Mammary epithelial cell (primary cell): ENCODE measurements at regions of chr4 and their contacts with region 1.

Region 1: DNA sequence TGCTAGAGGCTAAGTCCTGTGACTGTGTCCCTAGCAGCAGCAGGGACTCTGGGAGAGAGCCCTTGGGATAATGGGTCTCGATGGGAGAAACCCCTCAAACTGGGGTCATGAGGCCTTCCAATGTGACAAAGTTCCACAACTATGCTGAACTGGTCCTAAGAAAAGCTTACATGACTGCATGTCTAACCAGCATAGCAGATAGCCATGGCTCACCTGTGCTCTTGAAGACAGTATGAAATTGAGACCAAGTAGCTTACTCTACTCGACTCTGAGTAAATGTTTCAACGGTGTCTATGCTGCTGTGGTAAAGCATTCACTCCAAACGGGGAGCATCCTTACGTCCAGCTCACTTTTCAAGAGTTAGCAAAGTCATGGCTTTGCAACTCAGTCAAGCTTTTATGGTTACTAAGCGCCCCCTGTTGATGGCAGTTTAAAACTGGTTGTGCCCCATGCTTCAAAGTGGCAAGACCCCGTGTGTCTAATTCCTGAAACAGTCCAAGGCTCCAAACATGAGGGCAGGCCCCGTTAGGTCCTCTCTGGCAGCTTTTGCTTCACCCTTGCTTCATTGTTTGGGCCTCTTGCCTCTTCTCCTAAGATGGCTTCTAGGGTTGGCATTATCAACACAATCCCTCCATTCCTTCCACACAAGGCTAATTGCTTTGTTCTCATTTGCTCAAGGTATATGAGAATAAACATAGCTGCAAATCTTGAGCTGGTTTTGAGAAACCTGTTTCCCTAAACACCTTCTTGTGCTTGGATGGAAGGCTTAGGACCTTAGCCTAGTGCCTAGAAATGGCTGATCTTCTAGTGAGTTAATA is 46.6 kb downstream of the CCNG2 start:
- DNase-seq: peak; percentile 75
- H3K4me3 ChIP-seq: no peak overlapping the region
- H3K27ac ChIP-seq: peak overlapping the region; percentile 90
- H3K4me1 ChIP-seq: peaks cover 44% of the 10 kb centered on the region
- H3K27me3 ChIP-seq: no peaks in the 10 kb centered on the region
- CTCF ChIP-seq: peak; percentile 80 to 87

Region 2: GRCh38 chr4:76430519-76431388 is 772.8 kb before region 1 on chr4:
- CTCF ChIA-PET with region 1: no interaction called
- dilution Hi-C with region 1: no loop called
- in situ Hi-C with region 1: no loop called
- intact Hi-C with region 1: loop called (anchors 5 kb)
- DNase-seq: peak; percentile 23
- H3K4me3 ChIP-seq: no peak overlapping the region
- H3K27ac ChIP-seq: no peak overlapping the region
- H3K4me1 ChIP-seq: peaks cover 17% of the 10 kb centered on the region
- H3K27me3 ChIP-seq: no peaks in the 10 kb centered on the region
- CTCF ChIP-seq: peak; percentile 57 to 65

Region 3: GRCh38 chr4:76585897-76586360 is 617.7 kb before region 1 on chr4:
- CTCF ChIA-PET with region 1: interaction called, 11 read pairs
- dilution Hi-C with region 1: no loop called
- in situ Hi-C with region 1: no loop called
- intact Hi-C with region 1: no loop called
- DNase-seq: peak; percentile 95
- H3K4me3 ChIP-seq: peak overlapping the region; percentile 67 to 77 (median 67)
- H3K27ac ChIP-seq: peak overlapping the region; percentile 79
- H3K4me1 ChIP-seq: peaks cover 34% of the 10 kb centered on the region
- H3K27me3 ChIP-seq: no peaks in the 10 kb centered on the region
- CTCF ChIP-seq: peak in 1 of 2 donors; percentile 42

Region 4: DNA sequence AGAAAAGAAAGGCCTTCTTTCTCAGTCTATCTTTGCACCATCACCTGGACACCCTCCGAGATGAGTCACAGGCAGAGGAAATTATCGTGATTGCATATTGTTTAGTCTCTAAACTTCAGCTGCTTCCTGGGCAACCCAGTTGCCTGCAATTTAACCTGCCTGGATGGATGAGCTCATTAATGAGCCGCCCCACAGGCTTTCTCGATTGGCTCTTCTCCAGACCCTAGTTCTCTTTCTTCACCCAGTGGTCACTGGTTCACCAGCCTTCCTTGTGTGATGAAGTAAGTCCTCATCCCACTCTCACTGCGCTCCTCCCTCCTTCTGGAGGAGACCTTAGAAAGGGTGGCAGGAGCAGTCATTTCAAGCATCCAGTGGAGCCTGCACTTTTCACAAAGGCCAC is 400.1 kb before region 1 on chr4:
- CTCF ChIA-PET with region 1: no interaction called
- dilution Hi-C with region 1: no loop called
- in situ Hi-C with region 1: no loop called
- intact Hi-C with region 1: no loop called
- DNase-seq: peak; percentile 97
- H3K4me3 ChIP-seq: no peak overlapping the region
- H3K27ac ChIP-seq: peak overlapping the region; percentile 83
- H3K4me1 ChIP-seq: peaks cover 13% of the 10 kb centered on the region
- H3K27me3 ChIP-seq: no peaks in the 10 kb centered on the region
- CTCF ChIP-seq: no peak

Region 5: DNA sequence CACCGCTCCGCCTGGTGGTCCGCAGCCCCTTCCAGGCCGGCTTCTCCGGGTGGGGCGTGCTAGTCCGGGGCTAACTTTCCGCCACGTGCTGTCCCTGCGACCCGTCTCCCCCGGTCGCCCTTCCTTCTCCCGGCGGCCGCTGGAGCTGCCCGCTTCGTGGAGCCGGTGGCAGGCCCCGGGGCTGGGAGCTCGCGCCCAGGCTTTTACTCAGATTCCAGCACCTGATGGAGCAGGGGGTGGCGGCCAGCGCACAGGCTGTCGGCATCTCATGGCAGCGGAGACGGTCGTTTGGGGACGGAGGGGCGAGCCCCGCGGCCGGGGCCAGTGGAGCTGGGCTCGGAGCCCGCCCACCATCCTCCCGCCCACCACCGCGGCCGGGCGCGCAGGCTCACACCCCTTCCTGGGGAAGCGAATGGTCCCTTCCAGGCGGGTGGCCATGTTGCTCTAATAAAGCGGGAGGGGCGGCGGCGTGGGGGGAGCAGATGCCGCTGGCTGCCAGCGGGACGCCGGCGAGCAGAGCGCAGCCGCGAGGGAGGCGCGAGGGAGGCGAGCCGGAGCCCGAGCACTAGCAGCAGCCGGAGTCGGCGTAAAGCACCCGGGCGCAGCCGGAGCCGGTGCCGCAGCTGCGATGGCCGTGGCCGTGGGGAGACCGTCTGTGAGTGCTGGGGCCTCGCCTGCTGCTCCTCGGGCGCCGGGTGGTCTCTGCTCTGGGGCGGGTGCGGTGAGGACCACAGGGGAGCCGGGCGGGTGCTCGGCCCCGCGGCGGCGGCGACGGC is 254.1 kb before region 1 on chr4 and contains the start of gene SEPTIN11:
- CTCF ChIA-PET with region 1: interaction called, 3 read pairs
- dilution Hi-C with region 1: no loop called
- in situ Hi-C with region 1: no loop called
- intact Hi-C with region 1: loop called (anchors 2 kb)
- DNase-seq: peak; percentile 92
- H3K4me3 ChIP-seq: peak within 1 kb of the TSS; percentile 61 to 80 (median 70)
- H3K27ac ChIP-seq: peak within 1 kb of the TSS; percentile 80
- H3K4me1 ChIP-seq: peaks cover 19% of the 10 kb centered on the region
- H3K27me3 ChIP-seq: no peaks in the 10 kb centered on the region
- CTCF ChIP-seq: no peak
- total RNA-seq, gene SEPTIN11: 156 to 188 TPM

Region 6: DNA sequence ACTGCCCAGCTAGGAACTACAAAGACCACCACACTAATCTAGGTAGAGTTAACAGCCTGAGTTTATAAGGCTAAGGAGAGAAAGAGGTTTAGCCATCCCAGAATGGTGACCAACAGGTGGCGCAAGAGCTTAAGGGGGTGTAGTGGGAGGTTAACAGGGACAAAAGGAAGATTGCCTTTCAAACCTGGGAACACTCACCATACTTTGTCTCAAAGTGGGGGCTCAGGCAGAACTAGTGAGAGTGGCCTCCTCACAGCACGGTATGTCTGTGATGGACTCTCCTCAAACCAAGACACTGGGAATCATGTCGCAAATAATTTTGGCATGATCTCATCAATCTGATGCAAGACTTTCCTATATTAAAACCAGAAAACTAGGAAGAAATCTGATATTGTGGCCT is 151.2 kb before region 1 on chr4:
- CTCF ChIA-PET with region 1: interaction called, 8 read pairs
- dilution Hi-C with region 1: loop called (anchors 5 kb)
- in situ Hi-C with region 1: loop called in 1 of 2 experiments (anchors 10 kb)
- intact Hi-C with region 1: loop called (anchors 1 kb)
- DNase-seq: peak; percentile 46
- H3K4me3 ChIP-seq: no peak overlapping the region
- H3K27ac ChIP-seq: peak overlapping the region; percentile 51
- H3K4me1 ChIP-seq: peaks cover 31% of the 10 kb centered on the region
- H3K27me3 ChIP-seq: no peaks in the 10 kb centered on the region
- CTCF ChIP-seq: peak; percentile 71 to 80

Region 7: GRCh38 chr4:77095101-77095821 is 108.3 kb before region 1 on chr4:
- CTCF ChIA-PET with region 1: interaction called, 7 read pairs
- dilution Hi-C with region 1: loop called (anchors 5 kb)
- in situ Hi-C with region 1: no loop called
- intact Hi-C with region 1: loop called (anchors 1 kb)
- DNase-seq: peak; percentile 53
- H3K4me3 ChIP-seq: no peak overlapping the region
- H3K27ac ChIP-seq: peak overlapping the region; percentile 26
- H3K4me1 ChIP-seq: peaks cover 43% of the 10 kb centered on the region
- H3K27me3 ChIP-seq: no peaks in the 10 kb centered on the region
- CTCF ChIP-seq: peak; percentile 94

Region 8: DNA sequence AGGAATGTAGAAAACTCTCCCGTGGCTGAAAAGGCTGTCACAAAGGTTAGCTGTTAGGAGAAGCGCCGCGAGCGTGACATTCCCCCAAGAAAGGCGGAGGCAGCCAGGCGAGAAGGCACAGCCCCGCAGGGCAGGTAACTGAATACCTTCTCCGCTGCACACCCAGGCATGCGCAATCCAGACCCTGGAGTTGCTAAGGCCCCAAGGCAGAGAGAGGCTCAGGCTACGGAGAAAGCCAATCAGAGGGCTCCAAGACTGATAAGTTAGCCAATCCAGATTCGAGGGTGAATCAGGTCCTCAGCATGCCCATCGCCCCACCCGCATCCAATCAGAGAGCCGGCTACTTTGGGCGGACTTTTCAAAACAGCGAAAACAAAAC is 47.1 kb before region 1 on chr4:
- CTCF ChIA-PET with region 1: interaction called, 7 read pairs
- dilution Hi-C with region 1: loop called (anchors 5 kb)
- in situ Hi-C with region 1: no loop called
- intact Hi-C with region 1: loop called (anchors 1 kb)
- DNase-seq: peak; percentile 100
- H3K4me3 ChIP-seq: peak overlapping the region; percentile 91 to 99 (median 99)
- H3K27ac ChIP-seq: peak overlapping the region; percentile 96
- H3K4me1 ChIP-seq: peaks cover 21% of the 10 kb centered on the region
- H3K27me3 ChIP-seq: no peaks in the 10 kb centered on the region
- CTCF ChIP-seq: no peak

Region 9: DNA sequence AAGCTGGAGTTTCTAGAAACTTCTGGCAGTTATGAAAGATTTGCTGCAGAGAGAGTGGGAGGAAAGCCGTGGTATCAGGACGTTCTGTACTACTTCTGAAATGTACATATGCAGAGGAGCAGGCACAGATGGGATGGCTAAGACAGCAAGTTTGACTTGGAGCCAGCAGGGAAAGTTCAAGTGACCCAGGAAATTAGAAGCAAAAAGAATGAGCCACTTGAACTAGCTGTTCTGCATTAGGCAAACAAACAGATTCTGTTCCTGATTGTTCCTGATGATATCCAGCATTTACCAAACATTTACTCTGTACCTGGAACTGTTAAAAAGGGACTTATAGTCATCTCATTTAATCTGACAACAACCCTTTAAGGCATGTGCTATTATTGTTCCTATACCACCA is 360.6 kb after region 1 on chr4:
- CTCF ChIA-PET with region 1: no interaction called
- dilution Hi-C with region 1: no loop called
- in situ Hi-C with region 1: no loop called
- intact Hi-C with region 1: no loop called
- DNase-seq: no peak
- H3K4me3 ChIP-seq: no peak overlapping the region
- H3K27ac ChIP-seq: no peak overlapping the region
- H3K4me1 ChIP-seq: no peaks in the 10 kb centered on the region
- H3K27me3 ChIP-seq: peaks cover 1% of the 10 kb centered on the region
- CTCF ChIP-seq: no peak